ENCODE measurements at regions of chr2 and their contacts with region 1.

Region 1: DNA sequence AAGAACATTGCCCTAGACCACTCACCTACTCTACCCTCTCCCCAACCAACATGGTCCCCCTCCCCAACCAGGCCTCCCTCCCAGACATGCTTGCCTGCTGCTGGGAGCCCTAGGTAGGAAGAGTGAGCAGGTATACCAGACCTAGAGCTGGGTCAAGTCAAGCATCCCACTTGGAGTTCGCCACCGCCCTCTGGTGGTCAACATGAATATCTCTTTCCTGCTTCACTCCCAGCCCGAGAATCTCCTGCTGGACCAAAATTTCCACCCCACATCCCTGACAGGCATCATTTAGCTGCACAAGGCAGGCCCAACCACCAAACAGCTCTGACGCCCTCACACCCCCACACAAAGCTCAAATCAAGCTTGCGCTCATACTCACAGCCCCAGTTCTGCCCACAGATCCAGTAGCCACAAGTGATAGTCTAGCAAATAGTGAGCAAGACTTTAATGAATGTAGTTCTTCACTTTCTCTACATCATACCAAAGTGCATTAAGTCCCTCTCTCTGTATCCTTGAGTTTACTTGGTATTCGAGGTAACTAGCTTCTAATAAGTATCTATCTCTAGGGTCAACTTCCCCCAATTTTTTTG is 116.0 kb downstream of the TNS1 start:
- DNase-seq: peak; percentile 86
- ATAC-seq: peak; percentile 92
- H3K4me3 Mint-ChIP-seq: no peak overlapping the region
- H3K27ac Mint-ChIP-seq: no peak overlapping the region
- H3K4me1 Mint-ChIP-seq: no peaks in the 10 kb centered on the region
- H3K27me3 Mint-ChIP-seq: no peaks in the 10 kb centered on the region
- CTCF ChIP-seq: peak; percentile 86

Region 2: GRCh38 chr2:216710551-216711301 is 1176.1 kb before region 1 on chr2:
- CTCF ChIA-PET with region 1: no interaction called
- POLR2A ChIA-PET with region 1: no interaction called
- DNase-seq: no peak
- ATAC-seq: peak; percentile 43; the same call in 1 of the 2 replicates
- H3K4me3 Mint-ChIP-seq: no peak overlapping the region
- H3K27ac Mint-ChIP-seq: no peak overlapping the region
- H3K4me1 Mint-ChIP-seq: no peaks in the 10 kb centered on the region
- H3K27me3 Mint-ChIP-seq: no peaks in the 10 kb centered on the region; the same call in 1 of the 2 replicates
- CTCF ChIP-seq: no peak

Region 3: DNA sequence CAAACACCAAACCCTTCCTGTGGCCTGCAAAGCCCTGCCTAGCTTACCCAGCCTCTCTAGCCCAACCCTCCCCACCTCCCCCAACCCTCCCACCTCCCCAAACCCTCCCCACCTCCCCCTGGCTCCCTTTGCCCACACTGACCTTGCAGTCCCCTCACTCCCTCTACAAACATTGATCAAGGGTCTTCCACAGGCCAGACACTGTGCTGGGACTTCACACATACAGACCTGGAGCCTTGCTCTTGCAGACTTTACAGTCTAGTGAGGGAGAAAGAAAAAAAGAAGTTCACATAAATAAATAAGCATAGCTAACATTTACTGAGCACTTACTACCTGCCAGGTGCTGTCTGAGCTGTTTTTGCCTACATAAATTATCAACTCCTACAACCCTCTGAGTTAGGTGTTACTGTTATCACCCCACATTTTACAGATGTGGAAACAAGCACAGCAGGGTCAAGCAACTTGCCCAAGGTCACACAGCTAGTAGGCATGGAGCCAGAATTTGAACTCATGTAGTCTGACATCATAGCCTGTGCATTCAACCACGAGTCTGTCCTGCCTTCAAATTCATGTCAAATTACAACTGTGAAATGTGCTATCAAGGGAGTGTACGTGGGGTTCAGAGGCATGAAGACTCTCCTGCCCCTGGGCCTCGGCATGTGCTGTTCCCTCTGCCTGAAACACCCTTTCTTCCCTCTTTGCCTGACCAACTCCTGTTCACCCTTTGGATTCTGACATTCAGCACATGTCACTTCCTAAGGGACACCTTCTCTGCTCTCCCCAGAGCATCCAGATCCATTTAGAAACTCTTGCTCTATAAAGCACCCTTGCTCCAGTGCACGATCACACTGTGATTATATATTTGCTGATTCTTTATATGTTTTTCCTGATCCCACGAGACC is 93.9 kb before region 1 on chr2:
- CTCF ChIA-PET with region 1: interaction called, 56 read pairs
- POLR2A ChIA-PET with region 1: interaction called, 3 read pairs
- DNase-seq: no peak
- ATAC-seq: no peak
- H3K4me3 Mint-ChIP-seq: no peak overlapping the region
- H3K27ac Mint-ChIP-seq: no peak overlapping the region
- H3K4me1 Mint-ChIP-seq: peaks cover 12% of the 10 kb centered on the region
- H3K27me3 Mint-ChIP-seq: peaks cover 2% of the 10 kb centered on the region; the same call in 1 of the 2 replicates
- CTCF ChIP-seq: no peak

Region 4: DNA sequence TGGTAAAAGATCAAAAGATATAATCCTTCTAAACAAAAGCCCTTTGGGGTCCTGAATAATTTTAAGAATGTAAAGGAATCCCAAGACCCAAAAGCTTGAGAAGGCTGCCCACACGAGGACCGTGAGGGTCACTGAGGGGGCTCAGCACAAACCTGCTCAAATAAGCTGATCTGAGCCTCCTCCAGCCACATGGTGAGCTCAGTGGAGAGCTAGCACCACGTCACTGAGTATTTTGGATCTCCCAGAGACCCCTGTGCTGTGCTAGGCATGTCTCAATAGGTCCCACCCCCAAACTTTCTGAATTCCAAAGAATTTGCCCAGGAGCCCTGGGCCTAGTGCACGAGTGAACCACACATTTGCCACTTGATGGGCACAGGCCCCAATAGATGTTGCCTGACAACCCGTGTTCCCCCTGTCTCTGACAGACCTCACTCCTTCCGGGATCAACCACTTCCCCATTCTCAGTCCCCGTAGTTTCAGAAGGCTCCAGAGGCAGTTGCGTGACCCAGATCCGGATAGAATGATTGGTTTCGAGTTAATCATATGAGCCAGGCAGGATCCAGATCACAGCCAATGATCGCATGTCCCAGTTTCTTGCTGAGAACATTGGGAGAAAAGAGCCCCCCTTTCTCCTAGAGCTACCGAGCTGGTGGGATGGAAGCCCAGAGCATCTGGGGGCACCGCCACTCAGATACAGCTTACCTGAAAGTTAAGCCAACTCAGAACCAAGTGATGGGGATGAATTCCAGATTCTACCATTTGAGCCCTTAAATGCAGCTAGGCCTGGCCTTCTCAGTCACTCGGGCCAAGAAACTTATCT is 87.9 kb before region 1 on chr2:
- CTCF ChIA-PET with region 1: interaction called, 11 read pairs
- POLR2A ChIA-PET with region 1: no interaction called
- DNase-seq: no peak
- ATAC-seq: no peak
- H3K4me3 Mint-ChIP-seq: no peak overlapping the region
- H3K27ac Mint-ChIP-seq: no peak overlapping the region
- H3K4me1 Mint-ChIP-seq: peaks cover 3% of the 10 kb centered on the region
- H3K27me3 Mint-ChIP-seq: no peaks in the 10 kb centered on the region
- CTCF ChIP-seq: no peak

Region 5: GRCh38 chr2:217827430-217828201 is 59.2 kb before region 1 on chr2:
- CTCF ChIA-PET with region 1: interaction called, 21 read pairs
- POLR2A ChIA-PET with region 1: no interaction called
- DNase-seq: no peak
- ATAC-seq: no peak
- H3K4me3 Mint-ChIP-seq: no peak overlapping the region
- H3K27ac Mint-ChIP-seq: no peak overlapping the region
- H3K4me1 Mint-ChIP-seq: peaks cover 12% of the 10 kb centered on the region
- H3K27me3 Mint-ChIP-seq: no peaks in the 10 kb centered on the region; the same call in 1 of the 2 replicates
- CTCF ChIP-seq: no peak

Region 6: DNA sequence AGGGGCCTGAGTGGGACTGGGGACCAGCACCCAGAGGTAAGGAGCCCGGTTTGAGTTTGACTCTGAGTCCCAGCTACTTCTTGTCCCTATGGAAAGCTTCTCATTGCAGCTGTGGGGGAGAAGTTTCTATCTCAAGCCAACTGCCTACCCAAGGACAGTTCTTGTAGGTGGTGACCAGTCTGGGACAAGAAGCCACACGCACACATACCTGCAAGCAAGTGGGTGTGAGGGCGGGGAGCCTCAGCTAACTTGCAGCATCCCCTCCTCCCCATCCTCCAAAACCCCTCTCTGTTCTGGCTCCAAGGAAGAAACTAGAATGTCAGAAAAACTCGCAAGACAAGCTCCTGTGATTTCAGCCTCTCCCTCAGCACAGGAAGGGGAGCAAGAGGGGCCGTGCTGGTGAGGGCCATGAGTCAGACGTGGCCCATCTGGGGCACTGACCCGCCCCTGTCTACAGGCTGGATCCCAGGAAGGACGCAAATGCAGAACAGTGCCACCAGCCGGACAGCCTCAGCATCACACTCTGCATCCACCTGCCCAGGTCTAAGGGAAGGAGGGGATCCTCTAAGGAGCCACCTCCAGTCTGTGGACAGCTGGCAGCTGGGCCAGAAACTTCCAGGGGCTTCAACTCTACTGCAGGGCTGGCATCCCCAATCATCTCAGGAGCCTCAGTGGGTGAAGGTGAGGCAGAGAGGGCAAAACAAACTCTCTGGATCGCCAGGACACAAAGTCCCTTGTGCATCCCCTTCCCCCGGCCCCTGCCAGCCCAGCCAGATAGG is 12.6 kb after region 1 on chr2:
- CTCF ChIA-PET with region 1: interaction called, 32 read pairs
- POLR2A ChIA-PET with region 1: no interaction called
- DNase-seq: peak; percentile 89
- ATAC-seq: peak; percentile 97
- H3K4me3 Mint-ChIP-seq: no peak overlapping the region
- H3K27ac Mint-ChIP-seq: no peak overlapping the region
- H3K4me1 Mint-ChIP-seq: peaks cover 19% of the 10 kb centered on the region; the same call in 1 of the 2 replicates
- H3K27me3 Mint-ChIP-seq: no peaks in the 10 kb centered on the region
- CTCF ChIP-seq: peak; percentile 75

Region 7: GRCh38 chr2:217988014-217988839 is 101.4 kb after region 1 on chr2:
- CTCF ChIA-PET with region 1: interaction called, 32 read pairs
- POLR2A ChIA-PET with region 1: no interaction called
- DNase-seq: peak; percentile 92
- ATAC-seq: peak; percentile 94
- H3K4me3 Mint-ChIP-seq: peak overlapping the region; percentile 65
- H3K27ac Mint-ChIP-seq: peak overlapping the region; percentile 98
- H3K4me1 Mint-ChIP-seq: peaks cover 17% of the 10 kb centered on the region
- H3K27me3 Mint-ChIP-seq: no peaks in the 10 kb centered on the region
- CTCF ChIP-seq: peak; percentile 89

Measured in WTC11 (cell line).